SK-N-SH (cell line): ENCODE measurements at regions of chr13 and their contacts with region 1.

Region 1: GRCh38 chr13:19984430-19985218 is 26.1 kb downstream of the ZMYM2 start:
- DNase-seq: peak; percentile 20
- H3K4me3 ChIP-seq: no peak overlapping the region
- H3K27ac ChIP-seq: no peak overlapping the region
- H3K4me1 ChIP-seq: peaks cover 0 to 4% of the 10 kb centered on the region in 2 experiments; a peak in 2 of 4 replicates
- H3K27me3 ChIP-seq: no peaks in the 10 kb centered on the region
- CTCF ChIP-seq: peak; percentile 76
- EP300 ChIP-seq: no peak
- RAD21 ChIP-seq: peak; percentile 52

Region 2: DNA sequence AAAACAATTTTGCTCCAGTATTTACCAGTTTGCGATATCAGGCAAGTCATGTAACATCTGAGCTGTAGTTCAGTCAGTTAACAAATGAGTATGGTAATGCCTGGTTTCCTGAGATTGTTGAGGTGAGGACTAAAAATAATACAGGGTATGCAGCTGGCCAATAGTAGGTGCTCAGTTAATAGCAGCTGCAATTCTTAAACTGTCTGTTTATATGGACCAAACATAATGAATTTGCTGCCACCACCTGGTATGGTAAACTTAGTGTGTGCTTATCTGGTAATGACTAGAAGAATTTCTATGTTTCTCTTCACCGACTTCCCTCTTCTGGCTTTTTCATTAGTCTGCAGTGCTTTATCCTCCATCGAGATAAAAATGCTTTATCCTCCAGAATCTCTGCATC is 17.0 kb before region 1 on chr13:
- CTCF ChIA-PET with region 1: interaction called, 14 read pairs
- POLR2A ChIA-PET with region 1: interaction called, 4 read pairs
- DNase-seq: no peak
- H3K4me3 ChIP-seq: no peak overlapping the region
- H3K27ac ChIP-seq: no peak overlapping the region
- H3K4me1 ChIP-seq: peaks cover 3 to 5% of the 10 kb centered on the region in 2 experiments; a peak in 2 of 4 replicates
- H3K27me3 ChIP-seq: no peaks in the 10 kb centered on the region
- CTCF ChIP-seq: no peak
- EP300 ChIP-seq: no peak
- RAD21 ChIP-seq: no peak

Region 3: DNA sequence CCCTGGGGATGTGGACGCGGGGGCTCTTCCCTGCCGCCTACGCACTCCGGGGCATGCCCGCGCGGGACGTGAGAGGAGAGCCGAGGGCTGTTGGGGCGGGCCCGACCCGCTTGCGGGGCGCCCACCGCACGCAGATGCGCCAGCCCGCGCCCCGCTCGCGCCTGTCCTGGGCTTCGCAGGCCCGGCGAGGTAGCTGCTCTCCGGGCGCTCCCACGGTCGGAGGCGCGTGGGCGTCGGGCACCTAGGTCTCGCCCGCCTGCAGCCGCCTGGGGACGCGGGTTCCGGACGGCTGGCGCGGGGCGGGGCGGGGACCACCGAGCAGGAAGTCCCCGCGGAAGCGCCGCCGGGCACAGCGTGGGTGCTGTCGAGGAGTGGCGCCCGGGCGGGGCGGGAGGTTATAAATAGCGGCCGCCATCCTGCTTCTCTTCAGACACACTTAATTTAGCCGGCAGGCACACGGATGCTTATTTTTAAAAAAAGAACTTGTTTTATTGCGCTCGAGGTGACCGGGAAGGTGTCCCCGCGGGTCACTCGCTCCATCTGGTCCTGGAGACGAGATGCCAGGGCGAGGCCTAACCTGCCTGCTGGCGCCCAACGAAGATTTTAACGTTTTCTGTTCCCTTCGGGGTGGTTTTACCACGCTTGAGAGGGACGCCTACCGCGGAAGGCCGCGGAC is 176.8 kb after region 1 on chr13:
- CTCF ChIA-PET with region 1: interaction called, 10 read pairs
- POLR2A ChIA-PET with region 1: no interaction called
- DNase-seq: peak; percentile 43
- H3K4me3 ChIP-seq: peak overlapping the region in 1 of 2 experiments; percentile 16; a peak in 1 of 4 replicates
- H3K27ac ChIP-seq: no peak overlapping the region
- H3K4me1 ChIP-seq: no peaks in the 10 kb centered on the region; a peak in 1 of 4 replicates
- H3K27me3 ChIP-seq: peaks cover 84% of the 10 kb centered on the region
- CTCF ChIP-seq: no peak
- EP300 ChIP-seq: no peak
- RAD21 ChIP-seq: no peak